GM13977 (cell line): ENCODE measurements at regions of chr16 and their contacts with region 1.

Region 1: GRCh38 chr16:67917852-67918236 is 13.8 kb downstream of the CTRL start:
- DNase-seq: no peak
- CTCF ChIP-seq: no peak

Region 2: GRCh38 chr16:67546761-67547422 is 371.0 kb before region 1 on chr16:
- in situ Hi-C with region 1: loop called (anchors 25 kb)
- DNase-seq: peak; percentile 82
- CTCF ChIP-seq: peak; percentile 96

Region 3: GRCh38 chr16:67968400-67969253 is 50.8 kb after region 1 on chr16 and contains the start of gene SLC12A4:
- in situ Hi-C with region 1: no loop called
- DNase-seq: peak; percentile 99
- CTCF ChIP-seq: peak; percentile 3